AG04449 (cell line): ENCODE measurements at regions of chr7 and their contacts with region 1.

Region 1: GRCh38 chr7:102404005-102404861 is 8.1 kb downstream of the PRKRIP1 start:
- DNase-seq: no peak
- H3K4me3 ChIP-seq: no peak overlapping the region
- CTCF ChIP-seq: peak; percentile 65

Region 2: GRCh38 chr7:102417105-102417504 is 12.9 kb after region 1 on chr7:
- CTCF ChIA-PET with region 1: interaction called, 20 read pairs
- POLR2A ChIA-PET with region 1: no interaction called
- DNase-seq: no peak
- H3K4me3 ChIP-seq: no peak overlapping the region
- CTCF ChIP-seq: no peak

Region 3: DNA sequence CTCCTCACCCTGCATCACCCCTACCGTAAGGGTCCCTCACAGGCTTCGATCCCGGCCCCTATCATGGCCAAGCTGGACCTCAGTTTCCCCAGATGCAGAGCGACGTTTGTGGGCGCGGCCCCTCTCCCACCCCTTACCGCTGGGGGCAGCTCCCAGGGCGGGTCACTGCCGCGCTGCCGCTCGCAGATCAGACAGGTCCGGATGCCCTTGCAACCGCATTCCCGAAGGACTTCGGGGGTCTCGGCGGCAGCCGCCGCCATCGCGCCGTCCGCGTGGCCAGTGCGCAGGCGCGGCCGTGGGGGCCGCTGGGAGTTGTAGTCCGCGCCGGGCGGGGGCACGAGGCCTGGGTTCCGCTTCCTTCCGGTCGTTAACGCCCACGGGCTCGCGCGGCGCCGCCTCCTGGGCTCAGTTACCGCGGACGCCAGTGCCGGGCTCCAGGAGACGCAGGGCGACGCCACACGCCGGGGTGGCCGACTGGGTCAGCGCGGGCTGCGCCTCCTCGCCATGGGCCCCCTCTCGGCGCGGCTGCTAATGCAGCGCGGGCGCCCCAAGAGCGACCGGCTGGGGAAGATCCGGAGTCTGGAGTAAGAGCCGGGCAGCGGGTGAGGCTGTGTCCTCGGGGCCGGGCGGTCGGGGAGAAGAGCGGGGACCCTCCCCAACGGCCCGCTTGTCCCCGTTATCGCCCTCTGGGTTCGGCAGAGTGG is 60.5 kb after region 1 on chr7 and contains the starts of genes ALKBH4 and LRWD1:
- CTCF ChIA-PET with region 1: interaction called, 10 read pairs
- POLR2A ChIA-PET with region 1: no interaction called
- DNase-seq: no peak
- H3K4me3 ChIP-seq: peak within 1 kb of the TSS; percentile 99
- CTCF ChIP-seq: peak; percentile 19